ENCODE measurements at regions of chr3 and their contacts with region 1.

Region 1: GRCh38 chr3:152471814-152472671 is 203.3 kb downstream of the MBNL1 start:
- DNase-seq: peak; percentile 52
- ATAC-seq: peak; percentile 92
- H3K4me3 ChIP-seq: peak overlapping the region in 1 of 2 experiments; percentile 19; a peak in 2 of 4 replicates
- H3K27ac ChIP-seq: no peak overlapping the region
- H3K4me1 ChIP-seq: no peaks in the 10 kb centered on the region
- H3K27me3 ChIP-seq: no peaks in the 10 kb centered on the region
- CTCF ChIP-seq: peak; percentile 86

Region 2: GRCh38 chr3:152426393-152426792 is 45.6 kb before region 1 on chr3:
- CTCF ChIA-PET with region 1: interaction called, 11 read pairs
- POLR2A ChIA-PET with region 1: no interaction called
- in situ Hi-C with region 1: no loop called
- intact Hi-C with region 1: no loop called
- DNase-seq: no peak
- ATAC-seq: no peak
- H3K4me3 ChIP-seq: no peak overlapping the region
- H3K27ac ChIP-seq: no peak overlapping the region
- H3K4me1 ChIP-seq: no peaks in the 10 kb centered on the region
- H3K27me3 ChIP-seq: no peaks in the 10 kb centered on the region
- CTCF ChIP-seq: no peak

Region 3: DNA sequence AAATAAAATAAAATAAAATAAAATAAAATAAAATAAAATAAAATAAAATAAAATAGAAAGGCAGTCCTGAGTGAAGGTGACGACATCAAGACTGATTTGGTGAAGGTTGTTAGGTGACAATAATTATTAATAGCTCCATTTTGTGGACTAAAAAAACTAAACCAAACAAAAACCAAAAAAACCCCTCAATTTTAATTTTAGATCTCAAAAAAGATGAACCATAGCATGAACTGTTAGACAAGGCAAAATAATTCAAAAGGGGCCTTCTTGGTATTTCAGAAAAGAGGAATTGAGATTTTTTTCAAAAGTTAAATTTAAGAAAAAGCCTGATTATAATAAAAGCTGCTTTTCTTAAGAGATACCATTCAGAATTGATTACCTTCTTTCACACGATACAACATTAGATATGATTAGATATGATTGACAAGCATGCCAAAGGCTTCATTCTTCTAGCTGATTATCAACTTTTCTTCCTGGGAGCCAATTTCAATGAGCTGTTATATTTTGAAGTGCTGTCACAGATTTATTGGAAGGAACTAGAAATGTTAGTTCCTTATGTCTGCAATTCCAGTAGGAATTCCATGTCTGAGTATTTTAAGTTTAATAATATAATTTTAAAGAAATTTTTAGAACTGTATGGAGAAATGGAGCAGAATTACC is 41.4 kb after region 1 on chr3:
- CTCF ChIA-PET with region 1: no interaction called
- POLR2A ChIA-PET with region 1: no interaction called
- in situ Hi-C with region 1: no loop called
- intact Hi-C with region 1: no loop called
- DNase-seq: no peak
- ATAC-seq: no peak
- H3K4me3 ChIP-seq: no peak overlapping the region
- H3K27ac ChIP-seq: no peak overlapping the region
- H3K4me1 ChIP-seq: no peaks in the 10 kb centered on the region
- H3K27me3 ChIP-seq: peaks cover 6% of the 10 kb centered on the region; the same call in 1 of the 2 replicates
- CTCF ChIP-seq: no peak

Region 4: GRCh38 chr3:152524198-152525140 is 52.4 kb after region 1 on chr3:
- CTCF ChIA-PET with region 1: interaction called, 3 read pairs
- POLR2A ChIA-PET with region 1: no interaction called
- in situ Hi-C with region 1: no loop called
- intact Hi-C with region 1: loop called (anchors 5 kb)
- DNase-seq: peak; percentile 56
- ATAC-seq: no peak
- H3K4me3 ChIP-seq: no peak overlapping the region
- H3K27ac ChIP-seq: no peak overlapping the region
- H3K4me1 ChIP-seq: no peaks in the 10 kb centered on the region
- H3K27me3 ChIP-seq: no peaks in the 10 kb centered on the region
- CTCF ChIP-seq: peak; percentile 77; the same call in 1 of the 2 replicates

Region 5: DNA sequence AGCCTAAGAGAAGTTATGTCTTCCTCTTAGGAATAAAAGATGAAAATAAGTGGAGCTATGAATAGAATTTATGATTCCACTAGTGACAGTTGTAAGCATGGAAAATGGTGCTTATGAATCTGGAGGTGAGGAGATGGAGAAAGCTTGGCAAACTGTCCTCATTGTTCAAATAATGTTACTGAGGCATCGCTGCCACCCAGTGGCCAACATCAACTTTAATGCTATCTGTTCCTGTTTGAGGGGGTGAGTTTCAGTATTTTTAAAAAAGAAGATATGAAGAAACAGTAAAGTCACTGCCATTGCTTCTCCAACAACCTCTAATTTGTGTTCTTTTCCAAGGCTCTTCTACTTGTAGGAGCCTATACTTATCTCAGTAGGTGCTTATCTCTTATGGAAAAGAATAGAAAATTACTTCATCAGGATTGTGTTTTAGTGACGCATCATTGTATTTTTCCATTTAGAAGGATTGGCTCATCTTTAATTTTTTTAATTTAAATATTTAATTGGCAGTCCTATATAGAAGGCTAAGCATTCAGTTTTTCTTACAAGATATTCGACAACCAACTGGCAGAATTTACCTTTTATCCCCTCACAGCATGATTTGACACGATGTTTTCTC is 102.5 kb after region 1 on chr3:
- CTCF ChIA-PET with region 1: no interaction called
- POLR2A ChIA-PET with region 1: no interaction called
- in situ Hi-C with region 1: no loop called
- intact Hi-C with region 1: loop called (anchors 2 kb)
- DNase-seq: peak; percentile 13
- ATAC-seq: peak; percentile 71; the same call in 1 of the 2 replicates
- H3K4me3 ChIP-seq: no peak overlapping the region
- H3K27ac ChIP-seq: no peak overlapping the region
- H3K4me1 ChIP-seq: no peaks in the 10 kb centered on the region
- H3K27me3 ChIP-seq: peaks cover 6% of the 10 kb centered on the region; the same call in 1 of the 2 replicates
- CTCF ChIP-seq: peak; percentile 62; the same call in 1 of the 2 replicates

Region 6: GRCh38 chr3:153426803-153427202 is 954.8 kb after region 1 on chr3:
- CTCF ChIA-PET with region 1: interaction called, 18 read pairs
- POLR2A ChIA-PET with region 1: no interaction called
- in situ Hi-C with region 1: no loop called
- intact Hi-C with region 1: no loop called
- DNase-seq: no peak
- ATAC-seq: no peak
- H3K4me3 ChIP-seq: no peak overlapping the region
- H3K27ac ChIP-seq: no peak overlapping the region
- H3K4me1 ChIP-seq: no peaks in the 10 kb centered on the region
- H3K27me3 ChIP-seq: no peaks in the 10 kb centered on the region
- CTCF ChIP-seq: no peak